ENCODE measurements at regions of chr1 and their contacts with region 1.

Region 1: DNA sequence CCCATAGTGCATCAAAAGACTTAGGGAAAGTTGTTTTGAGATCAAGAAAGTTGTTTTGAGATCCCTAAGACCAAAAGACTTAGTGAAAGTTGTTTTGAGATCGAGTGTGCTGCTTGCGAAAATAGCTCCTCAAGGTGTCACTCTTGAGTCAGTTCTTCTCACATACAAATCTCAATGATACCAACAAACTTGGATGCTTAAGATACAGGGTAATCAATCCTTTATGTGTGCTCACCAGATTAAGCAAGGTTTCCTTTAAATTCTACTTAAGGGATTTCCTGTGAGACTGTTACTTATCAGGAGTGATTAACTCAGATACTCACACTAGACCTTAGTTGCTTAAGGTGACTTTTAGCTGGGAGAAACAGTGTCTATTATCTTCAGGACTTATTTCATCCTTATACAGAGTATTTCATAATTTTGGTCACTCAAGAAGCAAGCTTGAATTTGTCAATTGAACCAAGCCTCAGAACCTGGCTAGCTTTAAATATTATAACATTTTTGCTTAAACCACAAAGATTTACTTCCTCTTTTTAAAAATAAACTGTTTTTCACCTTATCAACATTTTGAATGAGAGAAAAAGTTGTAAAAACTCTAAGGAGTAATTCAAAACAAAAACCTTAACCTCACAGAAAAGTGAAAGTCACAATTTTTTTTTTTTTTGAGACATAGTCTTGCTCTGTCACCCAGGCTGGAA is 8.0 kb upstream of the RLF start:
- DNase-seq: peak in 1 of 2 experiments; percentile 61
- ATAC-seq: peak; percentile 43 to 66; a peak in 3 of 6 replicates
- H3K4me3 ChIP-seq: no peak overlapping the region
- H3K27ac ChIP-seq: no peak overlapping the region
- H3K4me1 ChIP-seq: no peaks in the 10 kb centered on the region
- CTCF ChIP-seq: peak; percentile 65
- EP300 ChIP-seq: no peak
- POLR2A ChIP-seq: no peak
- RAD21 ChIP-seq: peak; percentile 53 to 60; a peak in 4 of 5 replicates

Region 2: DNA sequence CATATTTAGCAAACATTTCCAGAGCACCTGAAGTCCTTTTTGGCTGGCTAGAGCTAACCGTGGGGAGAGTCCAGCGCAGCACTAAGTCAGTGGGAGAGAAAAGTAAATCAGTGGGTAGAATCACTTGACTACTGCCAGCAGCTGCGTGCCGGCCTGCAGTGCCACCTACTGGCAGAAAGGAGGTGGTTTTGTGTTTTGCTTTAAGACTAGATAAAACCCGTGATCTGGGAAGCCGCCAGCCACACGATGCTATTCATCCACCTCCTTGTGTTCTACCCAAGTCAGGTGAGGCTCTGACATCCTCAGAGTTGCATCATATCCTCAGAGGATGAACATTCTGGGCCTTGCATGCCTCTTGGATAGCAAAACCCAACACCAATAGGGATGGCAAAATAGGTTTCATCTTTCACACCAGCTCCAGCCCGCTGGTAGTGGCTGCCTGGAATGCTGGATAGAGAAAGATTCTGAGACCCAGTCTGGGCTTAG is 499.6 kb before region 1 on chr1:
- CTCF ChIA-PET with region 1: no interaction called
- POLR2A ChIA-PET with region 1: no interaction called
- DNase-seq: peak; percentile 41 to 75
- ATAC-seq: peak; percentile 82 to 86
- H3K4me3 ChIP-seq: no peak overlapping the region
- H3K27ac ChIP-seq: no peak overlapping the region
- H3K4me1 ChIP-seq: no peaks in the 10 kb centered on the region
- CTCF ChIP-seq: peak; percentile 74
- EP300 ChIP-seq: no peak
- POLR2A ChIP-seq: no peak
- RAD21 ChIP-seq: peak; percentile 73 to 79

Region 3: GRCh38 chr1:40183055-40183710 is 30.0 kb after region 1 on chr1:
- CTCF ChIA-PET with region 1: interaction called, 11 read pairs
- POLR2A ChIA-PET with region 1: no interaction called
- DNase-seq: peak in 1 of 2 experiments; percentile 39
- ATAC-seq: peak in 1 of 2 experiments; percentile 75; a peak in 3 of 6 replicates
- H3K4me3 ChIP-seq: no peak overlapping the region
- H3K27ac ChIP-seq: no peak overlapping the region
- H3K4me1 ChIP-seq: no peaks in the 10 kb centered on the region
- CTCF ChIP-seq: peak; percentile 45
- EP300 ChIP-seq: no peak
- POLR2A ChIP-seq: no peak
- RAD21 ChIP-seq: 0 out of 5 replicates have a peak, but pooled peaks of 1 of the 2 experiments have one; percentile 26

Region 4: DNA sequence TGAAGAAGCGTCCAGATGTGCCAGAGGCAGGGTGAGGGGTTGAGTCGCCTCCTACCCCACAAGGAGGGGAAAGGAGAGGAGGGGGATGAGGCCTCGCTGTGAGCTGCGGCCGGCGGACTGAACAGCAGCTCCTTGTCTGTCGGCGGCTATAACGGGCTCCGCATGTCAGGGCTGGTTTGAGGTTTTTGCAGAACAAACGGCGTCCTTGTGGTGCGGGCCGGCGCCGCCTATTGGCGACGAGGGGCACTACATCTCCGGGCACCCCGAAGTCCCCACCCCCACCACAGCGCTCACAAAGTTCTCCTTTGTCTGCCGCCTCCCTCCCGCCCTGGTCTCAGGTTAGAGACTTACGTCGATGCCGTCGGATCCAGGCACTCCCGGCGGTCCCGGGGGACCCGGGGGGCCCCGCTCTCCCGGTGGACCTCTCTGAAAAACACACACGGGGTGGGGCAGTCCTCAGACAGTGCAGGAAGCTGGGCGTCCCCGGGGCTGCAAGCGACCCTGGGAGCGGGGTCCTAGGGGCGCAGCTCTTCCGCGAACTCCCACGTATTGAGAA is 162.1 kb after region 1 on chr1:
- CTCF ChIA-PET with region 1: interaction called, 24 read pairs
- POLR2A ChIA-PET with region 1: no interaction called
- DNase-seq: peak; percentile 58 to 81
- ATAC-seq: peak; percentile 75 to 89
- H3K4me3 ChIP-seq: peak overlapping the region; percentile 28; the same call in 2 of the 3 replicates
- H3K27ac ChIP-seq: peak overlapping the region in 1 of 2 experiments; percentile 79; a peak in 2 of 6 replicates
- H3K4me1 ChIP-seq: no peaks in the 10 kb centered on the region
- CTCF ChIP-seq: peak; percentile 59
- EP300 ChIP-seq: no peak
- POLR2A ChIP-seq: no peak
- RAD21 ChIP-seq: peak; percentile 42 to 48